CD4-positive, alpha-beta T cell (primary cell): ENCODE measurements at regions of chr2 and their contacts with region 1.

Region 1: GRCh38 chr2:105883911-105884694 is 139.4 kb downstream of the NCK2 start:
- DNase-seq: no peak
- ATAC-seq: no peak
- H3K4me3 ChIP-seq: no peak overlapping the region
- H3K4me3 Mint-ChIP-seq: peak overlapping the region; percentile 39
- H3K27ac ChIP-seq: no peak overlapping the region
- H3K27ac Mint-ChIP-seq: peak overlapping the region; percentile 66
- H3K4me1 ChIP-seq: peaks cover 61% of the 10 kb centered on the region
- H3K4me1 Mint-ChIP-seq: peaks cover 83% of the 10 kb centered on the region
- H3K27me3 ChIP-seq: no peaks in the 10 kb centered on the region
- H3K27me3 Mint-ChIP-seq: no peaks in the 10 kb centered on the region
- CTCF ChIP-seq: no peak

Region 2: DNA sequence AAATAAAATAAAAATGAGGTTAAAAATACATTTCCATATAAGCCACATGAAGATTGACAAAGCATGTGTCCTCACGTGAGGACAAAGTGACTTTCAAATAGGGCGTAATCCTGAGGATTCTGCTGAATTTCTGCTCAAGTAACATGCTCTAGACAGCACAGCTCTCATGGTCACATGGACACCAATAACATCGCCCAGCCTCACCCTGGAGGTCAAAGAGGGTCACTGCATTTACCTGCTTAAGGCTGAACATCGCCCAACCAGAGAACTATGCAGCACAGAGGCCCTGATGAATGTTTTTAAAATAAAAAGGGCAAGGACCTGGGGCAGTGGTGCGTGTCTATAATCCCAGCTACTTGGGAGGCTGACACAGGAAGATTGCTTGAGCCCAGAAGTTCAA is 584.8 kb before region 1 on chr2:
- CTCF ChIA-PET with region 1: no interaction called
- POLR2A ChIA-PET with region 1: no interaction called
- intact Hi-C with region 1: no loop called
- DNase-seq: no peak
- ATAC-seq: no peak
- H3K4me3 ChIP-seq: no peak overlapping the region
- H3K4me3 Mint-ChIP-seq: no peak overlapping the region
- H3K27ac ChIP-seq: no peak overlapping the region
- H3K27ac Mint-ChIP-seq: no peak overlapping the region
- H3K4me1 ChIP-seq: peaks cover 3% of the 10 kb centered on the region
- H3K4me1 Mint-ChIP-seq: peaks cover 26% of the 10 kb centered on the region
- H3K27me3 ChIP-seq: no peaks in the 10 kb centered on the region
- H3K27me3 Mint-ChIP-seq: no peaks in the 10 kb centered on the region
- CTCF ChIP-seq: no peak

Region 3: DNA sequence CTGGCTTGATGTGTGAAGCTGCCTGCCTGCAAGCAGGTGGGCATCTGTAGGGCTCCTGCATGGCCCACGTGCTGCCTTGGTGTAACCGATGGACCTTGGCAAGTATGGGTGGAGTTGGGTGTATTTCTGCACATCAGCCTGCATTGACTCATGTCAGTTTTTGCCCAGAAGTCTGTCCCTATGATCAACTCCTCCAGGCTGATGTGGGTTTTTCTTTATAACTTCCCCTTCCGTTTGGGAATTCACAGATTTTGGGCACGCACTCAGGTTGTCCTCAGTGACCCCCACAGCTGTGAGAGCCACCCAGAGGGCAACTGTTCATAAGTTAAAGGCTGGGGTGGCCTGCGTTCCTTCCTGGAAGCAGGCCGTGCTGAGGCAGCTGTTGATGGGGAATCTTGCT is 16.0 kb before region 1 on chr2:
- CTCF ChIA-PET with region 1: interaction called, 3 read pairs
- POLR2A ChIA-PET with region 1: interaction called, 4 read pairs
- intact Hi-C with region 1: loop called in 1 of 2 experiments (anchors 2 kb)
- DNase-seq: no peak
- ATAC-seq: no peak
- H3K4me3 ChIP-seq: no peak overlapping the region
- H3K4me3 Mint-ChIP-seq: no peak overlapping the region
- H3K27ac ChIP-seq: no peak overlapping the region
- H3K27ac Mint-ChIP-seq: peak overlapping the region; percentile 76
- H3K4me1 ChIP-seq: peaks cover 96% of the 10 kb centered on the region
- H3K4me1 Mint-ChIP-seq: peaks cover 95% of the 10 kb centered on the region
- H3K27me3 ChIP-seq: no peaks in the 10 kb centered on the region
- H3K27me3 Mint-ChIP-seq: no peaks in the 10 kb centered on the region
- CTCF ChIP-seq: no peak

Region 4: GRCh38 chr2:105969555-105969954 is 85.5 kb after region 1 on chr2:
- CTCF ChIA-PET with region 1: no interaction called
- POLR2A ChIA-PET with region 1: no interaction called
- intact Hi-C with region 1: no loop called
- DNase-seq: no peak
- ATAC-seq: no peak
- H3K4me3 ChIP-seq: no peak overlapping the region
- H3K4me3 Mint-ChIP-seq: no peak overlapping the region
- H3K27ac ChIP-seq: no peak overlapping the region
- H3K27ac Mint-ChIP-seq: no peak overlapping the region
- H3K4me1 ChIP-seq: peaks cover 24% of the 10 kb centered on the region
- H3K4me1 Mint-ChIP-seq: peaks cover 25% of the 10 kb centered on the region
- H3K27me3 ChIP-seq: no peaks in the 10 kb centered on the region
- H3K27me3 Mint-ChIP-seq: no peaks in the 10 kb centered on the region
- CTCF ChIP-seq: no peak

Region 5: GRCh38 chr2:106053116-106053515 is 169.0 kb after region 1 on chr2:
- CTCF ChIA-PET with region 1: no interaction called
- POLR2A ChIA-PET with region 1: no interaction called
- intact Hi-C with region 1: no loop called
- DNase-seq: peak in 4 of 14 experiments; percentile 34 to 61 (median 42)
- ATAC-seq: peak; percentile 45
- H3K4me3 ChIP-seq: no peak overlapping the region
- H3K4me3 Mint-ChIP-seq: peak overlapping the region; percentile 64
- H3K27ac ChIP-seq: no peak overlapping the region
- H3K27ac Mint-ChIP-seq: peak overlapping the region; percentile 24
- H3K4me1 ChIP-seq: peaks cover 57% of the 10 kb centered on the region
- H3K4me1 Mint-ChIP-seq: peaks cover 73% of the 10 kb centered on the region
- H3K27me3 ChIP-seq: no peaks in the 10 kb centered on the region
- H3K27me3 Mint-ChIP-seq: no peaks in the 10 kb centered on the region
- CTCF ChIP-seq: no peak